ENCODE measurements at regions of chr9 and their contacts with region 1.

Region 1: GRCh38 chr9:137423004-137423874 is at the starts of genes EXD3 and NOXA1:
- DNase-seq: peak; percentile 99
- CTCF ChIP-seq: peak; percentile 65

Region 2: DNA sequence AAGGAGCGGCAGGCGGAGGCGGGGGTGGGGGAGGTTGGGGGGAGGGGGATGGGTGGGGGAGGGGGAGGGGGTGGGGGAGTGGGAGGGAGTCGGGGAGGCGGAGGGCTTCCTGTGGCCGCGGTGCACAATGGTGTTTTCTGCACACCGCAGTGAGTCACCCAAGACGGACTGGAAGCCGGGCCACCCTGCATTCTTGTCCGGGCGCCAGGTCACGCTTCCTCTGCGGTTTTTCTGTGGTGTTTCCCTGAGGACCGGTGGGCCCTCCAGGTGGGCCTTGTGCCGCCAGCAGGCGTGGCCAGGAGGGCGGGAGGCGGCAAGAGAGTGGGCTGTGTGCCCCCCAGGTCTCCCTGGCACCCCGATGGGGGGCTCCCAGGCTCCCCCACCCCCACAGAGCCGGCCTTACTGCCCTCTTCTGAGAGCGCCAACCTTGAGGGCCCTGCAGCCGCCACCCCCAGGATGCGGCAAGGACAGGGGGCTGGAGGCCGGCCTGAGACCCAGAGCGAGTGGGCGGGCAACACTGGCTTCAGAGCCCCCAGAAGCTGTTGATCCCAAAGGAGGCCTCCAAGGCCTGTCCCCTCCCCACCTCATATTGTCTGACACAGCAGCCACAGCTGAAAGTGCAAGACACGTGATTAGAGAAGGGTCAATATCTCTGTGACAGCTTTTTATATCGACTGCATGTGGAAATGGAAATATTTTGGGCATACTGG is 11.4 kb before region 1 on chr9:
- CTCF ChIA-PET with region 1: interaction called, 30 read pairs
- POLR2A ChIA-PET with region 1: no interaction called
- DNase-seq: peak; percentile 82
- CTCF ChIP-seq: no peak

Region 3: GRCh38 chr9:137434498-137435380 is 11.5 kb after region 1 on chr9:
- CTCF ChIA-PET with region 1: interaction called, 21 read pairs
- POLR2A ChIA-PET with region 1: no interaction called
- DNase-seq: no peak
- CTCF ChIP-seq: no peak

Region 4: DNA sequence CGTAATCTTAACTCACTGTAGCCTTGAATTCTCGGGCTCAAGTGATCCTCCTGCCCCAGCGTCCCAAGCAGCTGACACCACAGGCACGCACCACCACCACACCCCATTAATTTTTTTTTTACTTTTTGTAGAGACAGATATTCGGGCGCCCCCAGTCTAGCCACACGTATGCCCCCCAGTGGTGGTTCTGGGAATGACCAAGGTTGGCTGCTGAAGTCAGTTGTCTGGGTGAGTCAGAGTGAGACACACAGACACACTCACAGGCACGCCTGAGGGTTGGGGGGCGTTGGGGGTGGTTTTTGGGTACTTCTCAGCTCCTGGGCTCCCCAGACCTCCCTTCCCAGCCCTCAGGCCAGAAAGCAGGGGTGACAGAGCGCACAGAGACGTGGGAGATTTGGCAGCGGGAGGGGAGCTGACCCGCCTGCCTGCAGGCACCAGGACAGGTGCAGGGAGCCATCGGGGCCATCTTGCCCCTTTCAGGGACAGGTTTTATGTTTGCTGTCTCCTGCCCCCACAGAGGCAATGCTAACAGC is 22.1 kb after region 1 on chr9:
- CTCF ChIA-PET with region 1: interaction called, 41 read pairs
- POLR2A ChIA-PET with region 1: no interaction called
- DNase-seq: peak; percentile 87
- CTCF ChIP-seq: peak; percentile 84